ENCODE measurements at regions of chr11 and their contacts with region 1.

Region 1: DNA sequence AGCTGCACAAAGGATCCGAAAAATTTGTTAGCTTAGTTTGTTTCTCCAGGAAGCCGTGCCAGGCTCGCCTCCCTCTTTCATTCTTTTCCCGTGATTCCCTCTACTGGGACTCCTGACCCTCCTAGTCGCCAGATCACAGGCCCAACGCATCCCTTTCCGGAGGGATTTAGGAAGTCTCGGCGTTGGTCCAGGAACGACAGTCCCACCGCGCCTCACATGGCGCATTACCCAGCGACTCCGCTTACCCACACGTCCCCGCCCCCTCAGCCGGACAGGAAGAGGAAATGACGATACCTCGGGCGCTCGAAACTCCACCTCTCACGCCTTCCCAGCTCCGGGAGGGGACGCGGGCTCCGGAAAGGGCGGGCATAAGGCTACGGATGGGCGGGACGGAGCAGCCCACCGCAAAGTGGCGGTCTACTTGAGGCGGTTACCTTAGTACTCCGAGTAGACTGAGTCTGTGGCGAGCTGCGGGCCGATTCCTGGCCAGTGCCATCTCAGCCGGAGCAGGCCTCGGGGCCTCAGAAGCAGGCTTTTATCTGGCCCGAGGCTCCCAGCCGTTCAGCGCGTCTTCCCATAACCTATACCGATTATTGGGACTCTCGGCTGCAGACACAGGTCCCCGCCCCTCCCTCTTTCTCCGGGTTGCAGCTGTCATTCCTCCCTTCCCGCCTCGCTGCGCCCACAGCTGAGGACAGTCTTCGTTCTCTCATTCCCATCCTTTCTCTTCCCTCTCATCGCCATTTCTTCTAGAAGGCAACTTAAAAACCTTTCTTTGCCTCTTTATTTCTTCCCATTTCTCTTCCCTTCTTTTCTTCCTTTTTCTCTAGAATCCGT is at the start of gene CCDC15:
- DNase-seq: peak; percentile 96
- total RNA-seq, gene CCDC15: 1.2 and 1.7 TPM in 2 replicates

Region 2: DNA sequence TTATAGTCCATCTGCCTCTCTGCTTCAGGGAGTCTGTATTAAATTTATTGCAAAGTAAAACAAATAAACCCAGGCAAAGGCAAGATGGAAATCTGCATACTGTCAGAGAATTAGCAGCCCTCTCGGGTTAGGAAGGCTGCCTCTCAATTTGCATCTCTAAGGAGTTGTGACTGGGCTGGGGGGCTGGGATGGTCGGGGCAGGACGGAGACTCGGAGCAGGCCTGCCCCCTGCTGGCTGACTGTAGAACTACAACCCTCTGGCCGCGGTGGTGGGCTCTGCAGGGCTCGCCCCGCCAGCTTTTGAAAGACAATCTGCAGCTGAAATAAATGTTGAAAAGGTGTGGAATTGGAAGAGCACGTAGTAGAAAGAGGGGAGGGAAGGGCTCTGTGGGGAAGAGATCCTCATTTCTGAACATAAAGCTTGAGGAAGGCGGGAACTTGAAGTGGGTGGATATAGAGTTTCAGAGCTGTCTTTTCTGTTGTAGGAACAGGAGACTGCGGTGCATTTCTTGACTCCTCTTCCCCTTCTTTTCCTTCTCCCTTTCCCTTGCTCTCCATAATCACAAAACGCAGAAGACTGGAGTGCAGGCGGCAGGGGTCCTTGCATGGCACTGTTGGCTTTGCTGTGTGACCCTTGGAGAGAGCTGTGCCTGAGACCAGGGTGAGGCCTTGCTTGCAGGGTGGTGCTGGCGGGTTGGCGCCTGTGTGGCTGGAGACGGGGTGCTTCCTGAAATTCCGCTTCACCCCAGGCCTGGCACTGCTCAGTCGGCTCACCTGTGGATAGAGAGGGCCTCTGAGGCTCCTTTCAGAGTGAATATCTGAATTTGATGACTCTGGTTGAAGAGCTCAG is 187.9 kb after region 1 on chr11:
- in situ Hi-C with region 1: loop called (anchors 10 kb)
- DNase-seq: peak; percentile 46

Region 3: DNA sequence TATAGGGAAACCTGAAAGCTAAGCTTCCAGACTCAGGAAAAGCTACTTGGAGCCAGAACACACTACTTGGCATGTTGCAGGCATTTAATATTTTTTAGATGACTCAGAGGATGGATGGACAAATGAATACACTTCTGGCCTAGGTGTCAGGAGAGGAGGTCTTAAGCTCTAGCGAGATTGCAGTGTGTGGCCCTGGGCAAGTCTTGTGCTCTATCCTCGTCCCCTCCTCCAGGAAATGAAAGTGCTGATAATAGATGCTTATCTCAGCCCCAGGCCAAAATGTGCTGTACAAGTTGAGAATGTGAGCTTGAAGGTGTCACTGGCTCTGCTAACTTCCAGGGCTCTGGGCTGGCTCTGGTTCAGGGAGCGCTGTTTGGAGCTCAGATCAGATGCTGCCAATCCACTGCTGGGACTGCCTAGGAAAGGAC is 346.8 kb after region 1 on chr11:
- in situ Hi-C with region 1: no loop called
- DNase-seq: peak; percentile 44

Measured in SK-MEL-5 (cell line).